Heart right ventricle (tissue), 16 donors: ENCODE measurements at regions of chr7 and their contacts with region 1.

Region 1: DNA sequence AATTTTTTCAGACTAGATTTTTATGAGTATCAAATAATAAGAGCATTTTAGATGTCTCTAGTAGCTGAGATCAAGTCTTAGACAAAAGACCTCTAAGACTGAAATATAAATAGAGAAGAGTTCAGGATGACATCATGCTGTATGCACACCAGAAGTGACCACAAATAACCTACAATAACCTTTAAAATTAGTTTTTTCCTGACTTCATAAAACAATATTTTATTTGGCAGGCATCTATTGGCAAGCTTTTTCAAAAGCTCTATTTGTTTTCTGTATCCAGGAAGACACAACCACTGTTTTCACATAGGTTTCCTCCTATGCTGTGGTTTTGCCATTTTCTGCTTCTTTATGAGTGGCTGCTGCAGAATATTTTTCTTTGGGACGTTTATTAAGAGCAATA is 359.1 kb downstream of the CRPPA start:
- DNase-seq: no peak
- ATAC-seq: peak; percentile 44 to 85 (median 74)
- H3K4me3 ChIP-seq: peak overlapping the region in 1 of 10 donors; percentile 16
- H3K27ac ChIP-seq: peak overlapping the region; percentile 18 to 89 (median 79)
- H3K4me1 ChIP-seq: peaks cover 0 to 70% (median 56%) of the 10 kb centered on the region in 9 donors
- H3K27me3 ChIP-seq: no peaks in the 10 kb centered on the region
- CTCF ChIP-seq: no peak

Region 2: GRCh38 chr7:15555381-15555859 is 506.8 kb before region 1 on chr7:
- intact Hi-C with region 1: loop called in 4 of 10 experiments (anchors 5 to 10 kb)
- DNase-seq: no peak
- ATAC-seq: peak in 1 of 8 donors; percentile 52
- H3K4me3 ChIP-seq: no peak overlapping the region
- H3K27ac ChIP-seq: peak overlapping the region in 2 of 10 donors; percentile 79 to 89
- H3K4me1 ChIP-seq: peaks cover 0 to 42% (median 0%) of the 10 kb centered on the region in 9 donors
- H3K27me3 ChIP-seq: no peaks in the 10 kb centered on the region
- CTCF ChIP-seq: peak in 7 of 9 donors; percentile 7 to 58 (median 43)

Region 3: GRCh38 chr7:15720849-15721471 is 341.3 kb before region 1 on chr7:
- intact Hi-C with region 1: loop called in 2 of 10 experiments (anchors 5 to 10 kb)
- DNase-seq: peak in 1 of 2 donors; percentile 52
- ATAC-seq: no peak
- H3K4me3 ChIP-seq: no peak overlapping the region
- H3K27ac ChIP-seq: peak overlapping the region in 3 of 10 donors; percentile 5 to 34 (median 9)
- H3K4me1 ChIP-seq: peaks cover 0 to 17% (median 4%) of the 10 kb centered on the region in 9 donors
- H3K27me3 ChIP-seq: no peaks in the 10 kb centered on the region
- CTCF ChIP-seq: peak; percentile 38 to 89 (median 72)

Region 4: GRCh38 chr7:15751191-15751701 is 311.0 kb before region 1 on chr7:
- intact Hi-C with region 1: loop called in 1 of 10 experiments (anchors 10 kb)
- DNase-seq: no peak
- ATAC-seq: peak in 7 of 8 donors; percentile 31 to 82 (median 66)
- H3K4me3 ChIP-seq: no peak overlapping the region
- H3K27ac ChIP-seq: peak overlapping the region in 7 of 10 donors; percentile 19 to 54 (median 37)
- H3K4me1 ChIP-seq: peaks cover 0 to 40% (median 23%) of the 10 kb centered on the region in 9 donors
- H3K27me3 ChIP-seq: no peaks in the 10 kb centered on the region
- CTCF ChIP-seq: no peak

Region 5: DNA sequence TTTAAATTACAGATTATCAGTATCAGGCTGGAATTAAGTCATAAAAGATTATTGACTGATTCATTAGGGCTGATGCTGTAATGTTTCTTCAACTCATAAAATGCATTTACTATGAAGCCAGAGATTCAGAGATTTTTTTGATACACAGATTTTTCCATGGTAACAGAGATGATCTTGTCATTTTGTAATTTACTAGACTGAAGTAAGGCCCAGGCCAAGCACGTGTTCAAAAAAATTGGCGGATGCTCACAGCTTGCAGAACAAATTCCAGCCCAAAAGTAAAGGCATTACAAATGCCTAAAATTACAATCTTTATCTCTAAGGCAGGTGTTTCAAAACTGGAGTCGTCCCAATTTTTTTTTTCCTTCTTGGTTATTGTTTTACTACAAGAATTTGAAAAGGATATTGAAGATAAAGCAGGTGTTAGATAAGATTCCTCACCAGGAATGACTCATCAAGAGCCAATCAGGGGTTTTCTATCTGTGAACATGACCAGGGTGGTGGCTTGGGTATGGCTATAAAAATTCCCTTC is 297.4 kb before region 1 on chr7:
- intact Hi-C with region 1: loop called in 3 of 10 experiments (anchors 5 to 10 kb)
- DNase-seq: peak in 1 of 2 donors; percentile 60
- ATAC-seq: peak; percentile 50 to 86 (median 81)
- H3K4me3 ChIP-seq: no peak overlapping the region
- H3K27ac ChIP-seq: peak overlapping the region in 9 of 10 donors; percentile 25 to 84 (median 55)
- H3K4me1 ChIP-seq: peaks cover 0 to 32% (median 14%) of the 10 kb centered on the region in 9 donors
- H3K27me3 ChIP-seq: no peaks in the 10 kb centered on the region
- CTCF ChIP-seq: no peak

Region 6: GRCh38 chr7:15839416-15840100 is 222.7 kb before region 1 on chr7:
- intact Hi-C with region 1: loop called in 4 of 10 experiments (anchors 5 to 10 kb)
- DNase-seq: peak; percentile 69 to 83
- ATAC-seq: peak; percentile 91 to 99 (median 98)
- H3K4me3 ChIP-seq: peak overlapping the region in 9 of 10 donors; percentile 20 to 55 (median 43)
- H3K27ac ChIP-seq: peak overlapping the region; percentile 46 to 95 (median 80)
- H3K4me1 ChIP-seq: peaks cover 0 to 43% (median 16%) of the 10 kb centered on the region in 9 donors
- H3K27me3 ChIP-seq: no peaks in the 10 kb centered on the region
- CTCF ChIP-seq: no peak

Region 7: DNA sequence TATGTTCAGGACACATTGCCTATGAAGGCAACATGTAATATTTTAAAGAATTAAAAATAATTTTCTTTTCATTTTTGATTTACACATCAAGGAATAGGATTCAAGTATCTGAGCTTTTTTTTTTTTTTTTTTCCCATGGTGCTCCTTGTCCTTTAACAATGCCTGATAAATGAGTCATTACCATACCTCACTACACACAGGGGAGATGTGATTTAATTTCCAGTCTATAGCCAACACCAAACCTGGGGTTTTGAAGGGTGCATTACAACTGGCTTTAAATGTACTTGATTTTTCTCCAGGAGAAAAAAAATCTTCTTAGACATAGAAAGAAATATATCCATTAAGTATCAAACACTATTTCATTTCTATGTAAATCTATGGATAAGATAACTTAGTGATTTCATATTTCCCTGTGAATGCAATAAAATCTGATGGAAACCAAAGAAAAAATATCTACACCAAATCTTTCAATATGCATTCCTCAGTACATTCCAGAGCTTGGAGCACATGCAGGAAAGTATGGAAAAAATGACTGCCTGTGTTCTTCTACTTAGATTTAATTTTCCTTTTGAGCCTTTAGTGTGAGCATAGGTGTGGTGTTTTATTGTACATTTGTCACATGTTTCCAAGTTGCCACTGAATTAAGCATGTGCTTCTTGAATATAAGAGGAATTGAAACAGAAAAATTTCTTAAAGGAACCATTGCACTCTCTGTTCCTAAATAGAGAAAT is 171.0 kb before region 1 on chr7:
- intact Hi-C with region 1: loop called in 1 of 10 experiments (anchors 10 kb)
- DNase-seq: no peak
- ATAC-seq: no peak
- H3K4me3 ChIP-seq: no peak overlapping the region
- H3K27ac ChIP-seq: no peak overlapping the region
- H3K4me1 ChIP-seq: peaks cover 0 to 13% (median 0%) of the 10 kb centered on the region in 9 donors
- H3K27me3 ChIP-seq: no peaks in the 10 kb centered on the region
- CTCF ChIP-seq: no peak